MCF 10A (cell line): ENCODE measurements at regions of chr4 and their contacts with region 1.

Region 1: DNA sequence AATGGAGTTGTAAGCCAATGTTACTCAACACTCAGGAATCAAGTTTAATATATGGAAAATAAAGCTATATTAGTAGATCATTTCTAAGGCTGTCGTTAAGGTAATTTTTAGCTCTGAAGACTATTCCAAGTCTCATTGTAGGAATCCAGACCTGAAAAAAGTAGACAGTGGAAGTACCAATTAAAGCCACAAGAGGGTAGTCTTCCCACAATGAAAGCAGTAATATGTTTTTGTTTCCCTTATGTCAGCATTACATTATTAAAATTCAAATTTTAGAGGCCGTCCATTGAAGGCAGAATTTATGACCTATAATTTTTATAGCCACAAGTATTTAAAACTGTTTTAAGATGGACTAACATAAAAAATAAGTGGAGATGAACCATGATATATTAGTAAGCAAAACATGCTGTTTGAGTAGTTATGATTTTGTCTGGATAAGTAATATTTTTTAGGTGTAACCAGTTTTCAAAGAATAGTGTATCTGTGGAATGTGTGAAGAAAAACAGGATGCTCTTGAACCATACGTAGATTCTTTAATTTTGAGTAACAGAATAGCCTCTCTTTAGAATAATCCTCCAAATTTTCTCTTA is 372.6 kb upstream of the TECRL start:
- DNase-seq: peak; percentile 57
- H3K4me3 Mint-ChIP-seq: no peak overlapping the region
- H3K27ac Mint-ChIP-seq: no peak overlapping the region
- H3K4me1 Mint-ChIP-seq: no peaks in the 10 kb centered on the region
- H3K27me3 Mint-ChIP-seq: no peaks in the 10 kb centered on the region
- CTCF ChIP-seq: peak; percentile 60

Region 2: GRCh38 chr4:64617800-64618199 is 164.0 kb before region 1 on chr4:
- CTCF ChIA-PET with region 1: no interaction called
- POLR2A ChIA-PET with region 1: no interaction called
- intact Hi-C with region 1: loop called (anchors 5 kb)
- DNase-seq: peak; percentile 48
- H3K4me3 Mint-ChIP-seq: no peak overlapping the region
- H3K27ac Mint-ChIP-seq: peak overlapping the region; percentile 2
- H3K4me1 Mint-ChIP-seq: peaks cover 6% of the 10 kb centered on the region
- H3K27me3 Mint-ChIP-seq: no peaks in the 10 kb centered on the region
- CTCF ChIP-seq: peak; percentile 39

Region 3: GRCh38 chr4:66169341-66169740 is 1387.5 kb after region 1 on chr4:
- CTCF ChIA-PET with region 1: interaction called, 6 read pairs
- POLR2A ChIA-PET with region 1: no interaction called
- intact Hi-C with region 1: loop called (anchors 2 kb)
- DNase-seq: peak; percentile 52
- H3K4me3 Mint-ChIP-seq: no peak overlapping the region
- H3K27ac Mint-ChIP-seq: peak overlapping the region; percentile 25
- H3K4me1 Mint-ChIP-seq: no peaks in the 10 kb centered on the region
- H3K27me3 Mint-ChIP-seq: no peaks in the 10 kb centered on the region
- CTCF ChIP-seq: peak; percentile 37